Activated CD4-positive, alpha-beta T cell treated with anti-CD3 and anti-CD28 coated beads, Interleukin-2, amount 10 ng/mL, durations not matched to agents 24 days and 14 days (primary cell): ENCODE measurements at regions of chr12 and their contacts with region 1.

Region 1: GRCh38 chr12:119876761-119877638 is at the start of gene CIT:
- DNase-seq: peak; percentile 97
- H3K4me3 Mint-ChIP-seq: peak within 1 kb of the TSS; percentile 87
- H3K27ac Mint-ChIP-seq: peak within 1 kb of the TSS; percentile 79
- H3K4me1 Mint-ChIP-seq: peaks cover 21% of the 10 kb centered on the region
- H3K27me3 Mint-ChIP-seq: peaks cover 9% of the 10 kb centered on the region
- total RNA-seq, gene CIT: 44.5 and 51.5 TPM in 2 replicates

Region 2: GRCh38 chr12:119667577-119668323 is 209.2 kb before region 1 on chr12 and contains the start of gene PRKAB1:
- intact Hi-C with region 1: loop called (anchors 5 kb)
- DNase-seq: peak; percentile 99
- H3K4me3 Mint-ChIP-seq: peak within 1 kb of the TSS; percentile 88
- H3K27ac Mint-ChIP-seq: peak within 1 kb of the TSS; percentile 87
- H3K4me1 Mint-ChIP-seq: peaks cover 38% of the 10 kb centered on the region
- H3K27me3 Mint-ChIP-seq: peaks cover under 1% of the 10 kb centered on the region
- total RNA-seq, gene PRKAB1: 27.5 and 33.3 TPM in 2 replicates

Region 3: GRCh38 chr12:119949145-119949544 is 72.1 kb after region 1 on chr12:
- intact Hi-C with region 1: no loop called
- DNase-seq: no peak
- H3K4me3 Mint-ChIP-seq: no peak overlapping the region
- H3K27ac Mint-ChIP-seq: no peak overlapping the region
- H3K4me1 Mint-ChIP-seq: no peaks in the 10 kb centered on the region
- H3K27me3 Mint-ChIP-seq: peaks cover 6% of the 10 kb centered on the region

Region 4: DNA sequence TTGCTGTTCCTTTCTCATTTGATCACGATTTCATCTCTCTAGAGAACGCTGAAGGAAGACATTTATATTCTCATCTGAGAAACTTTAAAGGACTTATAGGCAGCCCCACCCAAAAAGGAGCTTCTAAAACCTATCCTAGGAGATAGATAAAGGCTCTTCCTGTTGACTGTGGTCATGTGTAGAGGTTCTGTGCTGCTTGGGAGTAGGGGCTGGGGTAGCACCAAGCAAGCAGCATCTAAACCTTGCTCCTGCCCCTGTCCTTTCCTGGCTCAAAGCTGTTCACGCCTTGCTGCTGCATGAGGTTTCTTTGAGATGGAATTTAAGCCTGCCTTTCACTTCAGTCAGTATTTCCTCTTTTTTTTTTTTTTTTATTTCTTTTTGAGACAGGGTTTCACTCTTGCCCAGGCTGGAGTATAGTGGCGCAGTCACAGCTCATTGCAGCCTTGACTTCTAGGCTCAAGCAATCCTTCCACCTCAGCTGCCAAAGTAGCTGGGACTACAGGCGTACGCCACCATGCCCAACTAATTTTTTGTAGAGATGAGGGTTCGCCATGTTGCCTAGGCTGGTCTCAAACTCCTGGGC is 198.1 kb after region 1 on chr12:
- intact Hi-C with region 1: no loop called
- DNase-seq: peak; percentile 70
- H3K4me3 Mint-ChIP-seq: peak overlapping the region; percentile 68
- H3K27ac Mint-ChIP-seq: peak overlapping the region; percentile 85
- H3K4me1 Mint-ChIP-seq: peaks cover 29% of the 10 kb centered on the region
- H3K27me3 Mint-ChIP-seq: no peaks in the 10 kb centered on the region